CD4-positive, alpha-beta T cell (primary cell): ENCODE measurements at regions of chr7 and their contacts with region 1.

Region 1: DNA sequence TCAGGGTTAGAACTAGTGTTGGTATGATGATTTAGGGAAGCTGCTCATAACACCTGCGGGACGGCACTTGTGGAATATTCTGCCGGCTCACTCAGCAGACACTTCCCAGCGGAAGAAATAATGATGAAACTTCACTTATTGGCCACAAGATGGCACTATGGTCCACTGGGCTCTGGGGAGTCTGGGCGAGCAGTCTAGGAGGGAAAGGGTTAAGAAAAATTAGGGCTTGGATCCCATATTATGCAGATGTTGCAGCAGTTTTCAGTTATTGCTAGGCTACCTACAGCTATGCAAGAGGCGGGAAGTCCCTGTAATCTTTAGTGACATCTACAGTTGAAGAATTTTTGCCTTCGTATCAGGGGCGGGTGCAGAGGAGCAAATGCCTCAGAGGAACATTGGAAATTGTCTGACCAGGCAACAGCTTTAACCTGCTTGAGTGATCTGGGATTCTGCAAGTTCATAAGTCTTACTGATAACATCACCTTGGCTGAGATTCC is 238.7 kb upstream of the PRSS58 start:
- DNase-seq: peak in 4 of 14 experiments; percentile 36 to 72 (median 60)
- ATAC-seq: peak; percentile 45
- H3K4me3 ChIP-seq: peak overlapping the region; percentile 3
- H3K4me3 Mint-ChIP-seq: peak overlapping the region; percentile 61
- H3K27ac ChIP-seq: peak overlapping the region in 1 of 2 donors; percentile 35
- H3K27ac Mint-ChIP-seq: peak overlapping the region; percentile 68
- H3K4me1 ChIP-seq: peaks cover 28% of the 10 kb centered on the region
- H3K4me1 Mint-ChIP-seq: peaks cover 60% of the 10 kb centered on the region
- H3K27me3 ChIP-seq: no peaks in the 10 kb centered on the region
- H3K27me3 Mint-ChIP-seq: no peaks in the 10 kb centered on the region
- CTCF ChIP-seq: peak; percentile 72

Region 2: GRCh38 chr7:142412551-142413193 is 83.9 kb before region 1 on chr7:
- CTCF ChIA-PET with region 1: no interaction called
- POLR2A ChIA-PET with region 1: no interaction called
- intact Hi-C with region 1: no loop called
- DNase-seq: peak in 12 of 14 experiments; percentile 7 to 77 (median 22)
- ATAC-seq: peak; percentile 76
- H3K4me3 ChIP-seq: no peak overlapping the region
- H3K4me3 Mint-ChIP-seq: no peak overlapping the region
- H3K27ac ChIP-seq: no peak overlapping the region
- H3K27ac Mint-ChIP-seq: no peak overlapping the region
- H3K4me1 ChIP-seq: peaks cover 4% of the 10 kb centered on the region
- H3K4me1 Mint-ChIP-seq: no peaks in the 10 kb centered on the region
- H3K27me3 ChIP-seq: no peaks in the 10 kb centered on the region
- H3K27me3 Mint-ChIP-seq: no peaks in the 10 kb centered on the region
- CTCF ChIP-seq: peak; percentile 68

Region 3: GRCh38 chr7:142459551-142459963 is 37.0 kb before region 1 on chr7:
- CTCF ChIA-PET with region 1: interaction called, 6 read pairs
- POLR2A ChIA-PET with region 1: interaction called, 8 read pairs
- intact Hi-C with region 1: loop called in 1 of 2 experiments (anchors 5 kb)
- DNase-seq: peak in 4 of 14 experiments; percentile 49 to 77 (median 60)
- ATAC-seq: peak; percentile 56
- H3K4me3 ChIP-seq: no peak overlapping the region
- H3K4me3 Mint-ChIP-seq: peak overlapping the region; percentile 2
- H3K27ac ChIP-seq: no peak overlapping the region
- H3K27ac Mint-ChIP-seq: peak overlapping the region; percentile 67
- H3K4me1 ChIP-seq: peaks cover 54% of the 10 kb centered on the region
- H3K4me1 Mint-ChIP-seq: peaks cover 87% of the 10 kb centered on the region
- H3K27me3 ChIP-seq: no peaks in the 10 kb centered on the region
- H3K27me3 Mint-ChIP-seq: no peaks in the 10 kb centered on the region
- CTCF ChIP-seq: peak; percentile 74

Region 4: GRCh38 chr7:142478479-142479072 is 18.0 kb before region 1 on chr7:
- CTCF ChIA-PET with region 1: interaction called, 10 read pairs
- POLR2A ChIA-PET with region 1: interaction called, 7 read pairs
- intact Hi-C with region 1: no loop called
- DNase-seq: peak in 6 of 14 experiments; percentile 7 to 72 (median 48)
- ATAC-seq: peak; percentile 27
- H3K4me3 ChIP-seq: no peak overlapping the region
- H3K4me3 Mint-ChIP-seq: peak overlapping the region; percentile 63
- H3K27ac ChIP-seq: peak overlapping the region; percentile 4 to 48
- H3K27ac Mint-ChIP-seq: peak overlapping the region; percentile 91
- H3K4me1 ChIP-seq: peaks cover 70% of the 10 kb centered on the region
- H3K4me1 Mint-ChIP-seq: peaks cover 89% of the 10 kb centered on the region
- H3K27me3 ChIP-seq: no peaks in the 10 kb centered on the region
- H3K27me3 Mint-ChIP-seq: no peaks in the 10 kb centered on the region
- CTCF ChIP-seq: peak; percentile 67

Region 5: GRCh38 chr7:142516038-142516501 is 19.5 kb after region 1 on chr7:
- CTCF ChIA-PET with region 1: interaction called, 14 read pairs
- POLR2A ChIA-PET with region 1: interaction called, 4 read pairs
- intact Hi-C with region 1: no loop called
- DNase-seq: peak in 7 of 14 experiments; percentile 22 to 79 (median 55)
- ATAC-seq: peak; percentile 72
- H3K4me3 ChIP-seq: no peak overlapping the region
- H3K4me3 Mint-ChIP-seq: no peak overlapping the region
- H3K27ac ChIP-seq: no peak overlapping the region
- H3K27ac Mint-ChIP-seq: peak overlapping the region; percentile 16
- H3K4me1 ChIP-seq: peaks cover 40% of the 10 kb centered on the region
- H3K4me1 Mint-ChIP-seq: peaks cover 58% of the 10 kb centered on the region
- H3K27me3 ChIP-seq: no peaks in the 10 kb centered on the region
- H3K27me3 Mint-ChIP-seq: no peaks in the 10 kb centered on the region
- CTCF ChIP-seq: peak; percentile 63